Right ventricle myocardium inferior (tissue), 1 donor: ENCODE measurements at regions of chr2 and their contacts with region 1.

Region 1: DNA sequence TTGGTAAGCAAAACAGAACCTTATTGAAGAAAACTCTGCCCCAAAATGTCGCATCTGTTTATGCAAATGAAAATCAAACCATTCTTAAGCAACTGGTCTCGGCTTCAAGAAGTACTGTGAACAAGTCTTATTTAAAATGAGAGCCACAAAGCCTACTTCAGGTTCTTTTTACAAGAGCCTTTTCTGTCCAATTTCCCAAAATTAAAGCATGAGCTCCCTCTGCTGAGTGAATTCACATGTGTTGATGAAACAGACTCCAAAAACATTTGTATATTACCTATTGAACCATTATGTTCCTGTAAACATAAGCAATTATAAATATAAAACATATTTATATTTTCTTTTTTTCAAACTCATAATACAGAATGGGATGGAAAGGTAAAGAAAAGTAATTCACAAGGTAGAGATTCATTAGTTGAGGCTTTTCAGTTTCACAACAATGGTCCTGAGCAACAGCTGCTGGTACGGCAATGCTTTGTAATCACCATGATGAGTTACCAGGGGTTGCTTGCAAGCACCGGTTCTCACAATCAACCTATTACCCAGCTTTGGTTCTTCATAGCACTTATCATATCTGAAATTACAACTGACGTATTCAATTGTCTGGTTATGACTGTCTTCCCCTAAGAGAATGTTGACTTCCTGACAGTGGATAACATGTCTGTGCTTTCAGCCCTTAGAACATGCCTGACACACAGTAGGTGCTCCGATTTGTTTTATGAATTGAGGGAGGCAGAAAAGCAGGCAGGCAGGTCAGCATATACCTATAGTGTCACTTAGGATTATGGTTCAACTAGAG is 108.4 kb upstream of the BZW1 start:
- DNase-seq: no peak
- ATAC-seq: no peak

Region 2: GRCh38 chr2:199973703-199974102 is 729.6 kb before region 1 on chr2:
- intact Hi-C with region 1: loop called (anchors 5 kb)
- DNase-seq: no peak
- ATAC-seq: peak; percentile 42

Region 3: GRCh38 chr2:200525882-200526651 is 177.3 kb before region 1 on chr2 and contains the start of gene SGO2:
- intact Hi-C with region 1: no loop called
- DNase-seq: peak; percentile 97
- ATAC-seq: peak; percentile 100
- total RNA-seq, gene SGO2: 1.5 TPM

Region 4: GRCh38 chr2:200578778-200579177 is 124.5 kb before region 1 on chr2:
- intact Hi-C with region 1: loop called (anchors 2 kb)
- DNase-seq: no peak
- ATAC-seq: no peak